Endothelial cell of umbilical vein (primary cell): ENCODE measurements at regions of chr12 and their contacts with region 1.

Region 1: GRCh38 chr12:79420146-79420618 is 270.6 kb downstream of the PAWR start:
- DNase-seq: peak; percentile 93
- H3K4me3 ChIP-seq: no peak overlapping the region
- H3K27ac ChIP-seq: peak overlapping the region; percentile 97
- H3K4me1 ChIP-seq: peaks cover 54% of the 10 kb centered on the region
- H3K27me3 ChIP-seq: no peaks in the 10 kb centered on the region
- CTCF ChIP-seq: peak; percentile 47 to 63
- POLR2A ChIP-seq: peak; percentile 9

Region 2: DNA sequence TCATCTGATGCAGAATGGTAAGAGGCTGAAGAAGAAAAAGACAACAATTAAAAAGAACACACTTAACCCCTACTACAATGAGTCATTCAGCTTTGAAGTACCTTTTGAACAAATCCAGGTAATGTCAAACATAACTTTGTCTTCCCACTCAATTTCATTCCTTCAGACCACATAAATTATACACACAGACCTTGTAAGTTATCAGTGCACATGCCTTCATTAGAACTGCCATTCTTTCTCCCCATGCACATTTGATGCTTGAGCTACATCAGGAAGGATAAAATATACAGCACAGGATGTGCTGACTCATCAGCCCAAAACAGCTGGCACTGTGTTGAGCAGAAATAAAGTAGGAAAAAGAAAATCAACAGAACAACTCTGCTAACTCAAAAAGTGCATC is 23.9 kb after region 1 on chr12:
- CTCF ChIA-PET with region 1: interaction called, 14 read pairs
- POLR2A ChIA-PET with region 1: no interaction called
- dilution Hi-C with region 1: no loop called
- intact Hi-C with region 1: no loop called
- DNase-seq: peak; percentile 83
- H3K4me3 ChIP-seq: no peak overlapping the region
- H3K27ac ChIP-seq: peak overlapping the region; percentile 33
- H3K4me1 ChIP-seq: peaks cover 22% of the 10 kb centered on the region
- H3K27me3 ChIP-seq: no peaks in the 10 kb centered on the region
- CTCF ChIP-seq: no peak
- POLR2A ChIP-seq: no peak

Region 3: DNA sequence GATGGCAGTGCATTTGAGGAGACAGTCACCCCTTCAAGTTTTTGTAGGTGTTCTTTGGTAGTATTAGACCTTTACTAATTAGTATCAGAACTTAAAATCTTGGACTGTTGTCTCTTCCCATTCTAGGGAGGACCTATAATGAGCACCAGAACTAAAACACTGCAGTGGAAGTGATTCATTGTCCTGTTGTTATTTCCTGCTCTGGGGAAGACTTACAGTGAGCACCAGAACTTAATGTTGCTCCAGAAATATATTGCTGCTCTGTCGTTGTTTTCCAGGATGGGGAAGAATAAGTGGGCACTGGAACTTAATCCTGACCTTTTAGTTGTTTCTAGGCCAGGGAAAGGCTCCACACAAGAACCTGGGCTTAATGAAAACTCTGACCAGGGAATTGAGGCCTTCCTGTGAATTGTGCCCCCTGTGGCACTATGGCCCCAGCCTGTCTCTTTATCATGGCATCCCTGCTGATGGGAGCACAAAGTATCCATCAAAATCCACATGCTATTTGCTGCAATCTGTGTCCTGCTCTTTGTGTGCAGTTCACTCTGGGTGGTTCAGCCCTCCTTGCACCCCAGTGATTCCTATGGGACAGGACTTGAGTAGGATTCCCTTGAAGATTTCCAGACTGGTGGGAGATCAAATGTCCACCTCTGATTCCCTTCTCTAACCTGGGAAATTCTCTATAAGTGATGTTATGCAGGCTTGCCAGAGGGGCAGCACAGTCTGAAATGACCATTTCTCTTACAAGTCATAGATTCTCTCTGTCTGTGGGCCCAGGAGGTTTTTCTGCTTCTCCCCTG is 94.7 kb after region 1 on chr12:
- CTCF ChIA-PET with region 1: no interaction called
- POLR2A ChIA-PET with region 1: no interaction called
- dilution Hi-C with region 1: no loop called
- intact Hi-C with region 1: loop called (anchors 1 kb)
- DNase-seq: peak; percentile 88
- H3K4me3 ChIP-seq: no peak overlapping the region
- H3K27ac ChIP-seq: peak overlapping the region; percentile 75
- H3K4me1 ChIP-seq: peaks cover 14% of the 10 kb centered on the region
- H3K27me3 ChIP-seq: no peaks in the 10 kb centered on the region
- CTCF ChIP-seq: no peak
- POLR2A ChIP-seq: peak; percentile 62

Region 4: DNA sequence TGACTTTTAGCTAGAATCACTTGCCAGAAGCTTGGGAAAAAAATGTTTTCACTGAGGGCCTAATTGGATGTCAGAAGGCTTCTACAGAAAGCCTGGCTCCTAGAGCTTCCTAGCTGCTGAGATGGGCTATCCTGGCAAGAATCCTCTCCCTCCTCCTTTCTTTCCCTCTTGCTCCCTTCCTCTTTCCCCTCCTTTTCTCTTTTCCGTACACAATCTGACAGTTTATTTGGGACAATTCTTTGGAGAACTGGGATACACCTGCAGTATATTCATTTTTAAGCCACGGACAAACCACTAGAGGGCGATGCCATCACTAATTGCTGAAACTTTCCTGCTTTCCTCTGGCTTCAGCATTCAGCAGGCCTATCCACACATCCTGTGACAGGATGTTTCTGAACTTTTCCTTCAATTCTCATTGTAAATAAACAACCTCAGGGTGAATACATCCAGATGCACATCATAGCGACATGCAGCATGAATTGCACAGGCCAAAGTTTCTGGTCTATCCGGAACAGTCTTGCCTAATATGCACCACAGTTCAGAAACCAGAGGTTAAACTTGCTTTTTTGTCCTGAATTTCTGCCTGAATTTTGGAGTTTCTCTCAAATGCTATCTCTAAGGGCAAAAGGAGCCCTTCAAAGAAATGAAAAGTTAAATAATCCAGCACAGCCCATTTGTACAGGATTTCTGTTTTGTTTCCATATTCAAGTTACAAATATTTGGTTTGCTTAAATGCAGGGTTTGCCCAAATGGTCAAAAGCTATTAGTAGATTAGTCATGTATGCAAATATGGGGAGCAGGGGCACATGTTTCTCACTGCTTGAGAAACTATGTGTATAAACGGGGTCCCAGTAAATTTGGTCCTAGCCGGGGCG is 127.8 kb after region 1 on chr12:
- CTCF ChIA-PET with region 1: interaction called, 84 read pairs
- POLR2A ChIA-PET with region 1: interaction called, 11 read pairs
- dilution Hi-C with region 1: no loop called
- intact Hi-C with region 1: loop called (anchors 1 kb)
- DNase-seq: peak; percentile 95
- H3K4me3 ChIP-seq: peak overlapping the region in 1 of 3 experiments; percentile 37
- H3K27ac ChIP-seq: peak overlapping the region; percentile 99
- H3K4me1 ChIP-seq: peaks cover 55% of the 10 kb centered on the region
- H3K27me3 ChIP-seq: no peaks in the 10 kb centered on the region
- CTCF ChIP-seq: peak; percentile 58 to 74
- POLR2A ChIP-seq: peak; percentile 69

Region 5: GRCh38 chr12:79690638-79691493 is 270.7 kb after region 1 on chr12 and contains the start of gene PAWR:
- CTCF ChIA-PET with region 1: interaction called, 14 read pairs
- POLR2A ChIA-PET with region 1: no interaction called
- dilution Hi-C with region 1: no loop called
- intact Hi-C with region 1: loop called (anchors 1 kb)
- DNase-seq: peak; percentile 83
- H3K4me3 ChIP-seq: peak within 1 kb of the TSS; percentile 85 to 96 (median 88)
- H3K27ac ChIP-seq: peak within 1 kb of the TSS; percentile 85
- H3K4me1 ChIP-seq: peaks cover 28% of the 10 kb centered on the region
- H3K27me3 ChIP-seq: no peaks in the 10 kb centered on the region
- CTCF ChIP-seq: peak in 1 of 2 donors; percentile 37
- POLR2A ChIP-seq: peak; percentile 21
- total RNA-seq, gene PAWR: 154 and 175 TPM in 2 replicates

Region 6: DNA sequence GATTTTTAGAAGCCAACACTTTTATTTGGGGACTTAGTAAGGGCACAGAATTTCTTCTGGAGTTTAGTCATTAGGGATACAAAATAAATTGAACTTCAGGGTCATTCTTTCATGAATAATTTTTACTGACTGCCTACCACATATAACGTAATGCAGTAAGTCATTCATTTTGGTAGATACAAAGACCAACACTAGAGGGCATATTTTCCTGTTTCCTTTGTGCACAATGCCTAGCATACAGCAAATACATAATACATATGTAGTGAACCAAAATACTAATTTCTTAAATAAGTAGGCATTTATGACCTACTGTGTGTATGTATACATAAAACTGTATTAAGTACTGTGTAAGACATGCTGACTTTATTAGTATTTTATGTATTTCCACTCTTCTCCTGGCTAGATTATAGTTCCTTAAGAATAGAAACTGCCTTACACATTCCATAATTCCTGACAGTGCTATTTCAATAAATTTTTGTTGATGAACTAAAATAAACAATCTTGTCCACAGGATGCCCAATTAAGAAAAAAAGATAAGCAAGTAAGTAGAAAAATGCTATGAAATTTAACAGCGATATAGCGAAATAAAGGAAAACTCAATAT is 466.8 kb after region 1 on chr12:
- CTCF ChIA-PET with region 1: interaction called, 11 read pairs
- POLR2A ChIA-PET with region 1: no interaction called
- dilution Hi-C with region 1: no loop called
- intact Hi-C with region 1: loop called (anchors 5 kb)
- DNase-seq: peak; percentile 77
- H3K4me3 ChIP-seq: no peak overlapping the region
- H3K27ac ChIP-seq: peak overlapping the region; percentile 3
- H3K4me1 ChIP-seq: peaks cover 30% of the 10 kb centered on the region
- H3K27me3 ChIP-seq: no peaks in the 10 kb centered on the region
- CTCF ChIP-seq: peak; percentile 33 to 39
- POLR2A ChIP-seq: no peak